RWPE1 (cell line): ENCODE measurements at regions of chr14 and their contacts with region 1.

Region 1: GRCh38 chr14:75258615-75259466 is 19.8 kb upstream of the FOS start:
- DNase-seq: peak; percentile 98
- H3K27ac ChIP-seq: peak overlapping the region; percentile 99
- CTCF ChIP-seq: no peak

Region 2: GRCh38 chr14:74612350-74613021 is 646.4 kb before region 1 on chr14:
- CTCF ChIA-PET with region 1: no interaction called
- POLR2A ChIA-PET with region 1: no interaction called
- DNase-seq: peak; percentile 68
- H3K27ac ChIP-seq: peak overlapping the region; percentile 84
- CTCF ChIP-seq: peak; percentile 100

Region 3: DNA sequence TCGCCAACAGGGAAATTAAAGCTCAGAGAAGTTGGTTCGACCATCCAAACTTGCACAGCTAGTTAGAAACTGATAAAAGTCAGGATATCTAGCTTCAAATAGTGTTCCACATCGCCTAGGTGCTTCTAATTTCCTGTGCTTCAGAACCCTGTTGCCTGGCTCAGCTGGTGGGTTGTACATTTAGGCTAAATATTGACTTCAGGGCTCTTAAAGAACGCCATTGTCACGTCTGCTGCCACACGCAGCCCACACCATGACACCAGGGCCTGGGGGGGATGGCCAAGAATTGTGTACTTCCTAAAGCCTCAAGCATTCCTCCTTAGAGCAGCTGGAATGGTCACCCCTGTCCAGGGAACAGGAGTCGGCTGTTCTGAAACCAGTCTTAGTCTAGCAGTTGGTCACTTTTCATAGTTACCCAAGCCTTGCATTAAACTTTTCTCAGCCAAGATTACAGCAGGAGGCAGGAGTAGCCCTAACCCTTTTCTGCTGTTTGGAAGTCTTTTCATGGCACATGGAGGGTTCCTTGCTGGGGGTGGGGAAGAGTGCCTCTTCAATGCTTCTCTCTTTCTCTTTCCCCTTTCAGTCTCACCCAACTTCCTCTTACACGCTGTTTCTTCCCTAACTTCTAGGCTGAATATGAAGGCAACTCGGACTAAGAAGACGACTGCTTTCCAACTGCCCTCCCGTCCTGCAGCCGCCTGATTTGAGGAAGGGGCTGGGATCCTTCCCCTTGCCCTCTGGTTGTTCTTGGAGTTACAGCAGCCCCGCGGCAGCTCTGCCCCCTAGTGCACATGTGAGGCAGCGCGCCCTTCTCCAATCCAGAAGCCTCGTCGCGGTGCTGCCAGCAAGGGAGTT is 36.9 kb after region 1 on chr14:
- CTCF ChIA-PET with region 1: interaction called, 10 read pairs
- POLR2A ChIA-PET with region 1: no interaction called
- DNase-seq: peak; percentile 66
- H3K27ac ChIP-seq: peak overlapping the region; percentile 94
- CTCF ChIP-seq: peak; percentile 97

Region 4: GRCh38 chr14:75350505-75351060 is 91.7 kb after region 1 on chr14:
- CTCF ChIA-PET with region 1: no interaction called
- POLR2A ChIA-PET with region 1: no interaction called
- DNase-seq: no peak
- H3K27ac ChIP-seq: no peak overlapping the region
- CTCF ChIP-seq: no peak

Region 5: GRCh38 chr14:75389679-75390078 is 130.8 kb after region 1 on chr14:
- CTCF ChIA-PET with region 1: no interaction called
- POLR2A ChIA-PET with region 1: no interaction called
- DNase-seq: no peak
- H3K27ac ChIP-seq: no peak overlapping the region
- CTCF ChIP-seq: no peak

Region 6: DNA sequence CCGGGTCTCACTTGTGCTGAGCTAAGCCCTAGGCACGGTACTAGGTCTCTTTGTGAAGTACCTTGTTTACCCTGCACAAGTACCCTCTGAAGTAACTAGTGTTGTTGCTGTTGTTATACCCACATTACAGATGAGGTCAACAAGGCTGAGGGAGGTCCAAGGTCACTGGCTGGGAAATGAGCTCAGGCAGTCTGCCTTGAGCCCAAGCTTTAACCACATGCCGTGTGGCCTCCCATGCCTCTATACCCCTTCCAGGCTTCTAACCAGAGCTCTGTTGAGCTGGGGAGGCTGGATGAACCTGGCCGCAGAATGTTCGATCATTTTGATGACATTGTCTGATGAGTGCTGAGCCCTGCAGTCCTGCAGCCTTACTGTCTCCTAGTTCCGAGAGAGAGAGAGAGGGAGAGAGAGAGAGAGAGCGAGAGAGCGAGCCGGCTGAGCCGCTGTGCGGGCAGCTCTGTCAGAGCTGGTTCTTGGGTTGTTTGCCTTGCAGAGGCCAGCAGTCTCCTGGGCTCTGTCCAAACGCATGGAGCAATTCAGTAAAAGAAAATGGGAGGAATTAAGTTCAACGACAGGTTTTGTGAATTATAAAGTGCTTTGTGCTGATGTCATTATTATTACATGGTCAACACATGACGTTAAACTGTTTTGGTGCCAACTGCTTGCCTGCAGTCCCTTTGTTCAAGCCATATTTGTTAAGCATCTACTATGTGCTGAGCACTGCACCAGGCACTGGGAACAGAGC is 182.1 kb after region 1 on chr14:
- CTCF ChIA-PET with region 1: no interaction called
- POLR2A ChIA-PET with region 1: no interaction called
- DNase-seq: no peak
- H3K27ac ChIP-seq: no peak overlapping the region
- CTCF ChIP-seq: no peak